T-cell (primary cell): ENCODE measurements at regions of chr3 and their contacts with region 1.

Region 1: DNA sequence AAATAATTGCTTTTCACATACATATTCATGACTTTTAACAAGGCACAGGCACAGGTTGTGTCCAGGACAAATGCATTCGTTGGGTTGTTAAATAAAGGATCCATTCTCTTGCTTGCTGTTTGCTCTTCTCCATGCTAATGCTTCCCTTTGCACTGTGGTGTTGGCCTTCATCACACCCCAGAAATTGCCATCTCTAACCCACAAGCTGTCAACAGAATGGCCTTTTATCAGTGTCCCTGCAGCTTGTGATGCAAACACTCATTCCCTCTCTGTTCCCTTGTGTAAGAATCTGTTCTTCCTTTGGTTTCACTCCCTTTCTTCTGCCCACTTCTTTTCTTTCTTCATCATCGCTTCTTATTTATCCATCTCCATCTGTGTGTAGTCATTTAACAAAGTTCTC is 72.2 kb downstream of the SLC7A14 start:
- DNase-seq: no peak
- ATAC-seq: no peak
- H3K4me3 ChIP-seq: no peak overlapping the region
- H3K4me3 Mint-ChIP-seq: no peak overlapping the region
- H3K27ac ChIP-seq: no peak overlapping the region
- H3K27ac Mint-ChIP-seq: no peak overlapping the region
- H3K4me1 ChIP-seq: no peaks in the 10 kb centered on the region
- H3K4me1 Mint-ChIP-seq: no peaks in the 10 kb centered on the region
- H3K27me3 ChIP-seq: peaks cover 0 to 7% of the 10 kb centered on the region in 2 experiments
- H3K27me3 Mint-ChIP-seq: peaks cover 20 to 29% of the 10 kb centered on the region in 2 donors

Region 2: DNA sequence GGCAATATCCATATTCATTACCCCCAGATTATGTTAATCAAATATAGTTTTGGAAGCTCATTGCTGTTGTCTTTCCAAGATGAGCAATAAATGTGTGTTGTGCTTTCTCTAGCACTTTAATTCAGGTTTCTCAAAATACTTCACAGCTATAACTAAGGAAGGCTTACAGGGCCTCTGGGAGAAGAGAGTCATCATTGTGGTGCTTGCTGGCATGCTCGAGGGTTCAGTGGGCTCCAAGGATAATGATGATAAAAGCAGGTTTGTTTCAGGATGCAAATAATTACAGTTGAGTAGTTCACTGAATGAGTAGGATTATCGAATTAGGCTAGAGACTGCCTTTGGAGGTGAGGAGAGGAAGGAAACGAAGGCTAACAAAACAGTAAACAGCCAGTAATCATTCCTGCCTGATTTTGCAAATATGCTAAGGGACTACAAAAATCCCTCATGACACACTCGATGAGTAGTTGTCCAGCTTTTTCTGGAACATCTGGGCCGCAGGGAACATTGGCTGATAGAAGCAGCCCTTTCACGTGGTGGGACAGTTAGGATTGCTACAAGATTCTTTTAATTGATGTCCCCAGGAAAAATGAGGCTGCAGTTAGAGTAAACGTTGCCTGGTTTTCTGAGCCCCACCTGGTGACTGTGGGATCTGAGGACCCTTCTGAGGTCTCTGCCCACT is 18.2 kb after region 1 on chr3:
- CTCF ChIA-PET with region 1: no interaction called
- POLR2A ChIA-PET with region 1: no interaction called
- DNase-seq: no peak
- ATAC-seq: no peak
- H3K4me3 ChIP-seq: no peak overlapping the region
- H3K4me3 Mint-ChIP-seq: no peak overlapping the region
- H3K27ac ChIP-seq: no peak overlapping the region
- H3K27ac Mint-ChIP-seq: no peak overlapping the region
- H3K4me1 ChIP-seq: no peaks in the 10 kb centered on the region
- H3K4me1 Mint-ChIP-seq: no peaks in the 10 kb centered on the region
- H3K27me3 ChIP-seq: peaks cover 0 to 4% of the 10 kb centered on the region in 2 experiments
- H3K27me3 Mint-ChIP-seq: peaks cover 7 to 22% of the 10 kb centered on the region in 2 donors

Region 3: GRCh38 chr3:170703121-170703588 is 189.5 kb after region 1 on chr3:
- CTCF ChIA-PET with region 1: interaction called in 1 of 2 experiments, 12 read pairs
- POLR2A ChIA-PET with region 1: no interaction called
- DNase-seq: no peak
- ATAC-seq: no peak
- H3K4me3 ChIP-seq: no peak overlapping the region
- H3K4me3 Mint-ChIP-seq: no peak overlapping the region
- H3K27ac ChIP-seq: no peak overlapping the region
- H3K27ac Mint-ChIP-seq: no peak overlapping the region
- H3K4me1 ChIP-seq: no peaks in the 10 kb centered on the region
- H3K4me1 Mint-ChIP-seq: no peaks in the 10 kb centered on the region
- H3K27me3 ChIP-seq: peaks cover 0 to 4% of the 10 kb centered on the region in 2 experiments
- H3K27me3 Mint-ChIP-seq: peaks cover 2 to 8% of the 10 kb centered on the region in 2 donors